GM12878 (cell line): ENCODE measurements at regions of chr3 and their contacts with region 1.

Region 1: GRCh38 chr3:197256836-197257444 is 41.5 kb downstream of the DLG1 start:
- DNase-seq: no peak
- ATAC-seq: 0 out of 3 replicates have a peak, but pooled peaks have one; percentile 38
- H3K4me3 ChIP-seq: no peak overlapping the region
- H3K27ac ChIP-seq: no peak overlapping the region
- H3K4me1 ChIP-seq: no peaks in the 10 kb centered on the region
- H3K27me3 ChIP-seq: no peaks in the 10 kb centered on the region
- CTCF ChIP-seq: peak; percentile 40 to 60 (median 56); a peak in 5 of 6 replicates
- EP300 ChIP-seq: no peak
- POLR2A ChIP-seq: no peak
- RAD21 ChIP-seq: peak; percentile 70

Region 2: DNA sequence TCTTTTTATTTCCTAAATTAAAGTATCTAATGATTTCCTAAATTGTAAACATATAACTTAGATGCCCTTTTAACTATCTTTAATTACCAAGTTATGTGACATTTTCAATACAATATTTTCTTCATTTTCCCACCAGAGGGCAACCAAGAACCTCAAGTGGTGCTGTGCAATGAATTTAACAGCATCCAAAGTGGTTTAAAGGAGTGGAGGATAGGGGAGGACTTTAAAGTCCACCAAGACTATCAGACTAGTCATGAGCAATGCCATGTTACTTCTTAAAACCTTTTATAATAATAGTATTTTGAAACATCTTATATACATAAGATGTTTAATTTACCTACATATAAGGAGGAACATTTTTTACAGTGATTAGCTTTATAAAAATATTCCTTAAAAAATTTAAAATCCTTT is 32.9 kb before region 1 on chr3:
- CTCF ChIA-PET with region 1: interaction called, 101 read pairs
- POLR2A ChIA-PET with region 1: no interaction called
- RAD21 ChIA-PET with region 1: interaction called, 27 read pairs
- SMC1A ChIA-PET with region 1: interaction called, 35 read pairs
- in situ Hi-C with region 1: no loop called
- intact Hi-C with region 1: loop called (anchors 5 kb)
- DNase-seq: peak; percentile 19
- ATAC-seq: peak; percentile 84
- H3K4me3 ChIP-seq: no peak overlapping the region
- H3K27ac ChIP-seq: no peak overlapping the region
- H3K4me1 ChIP-seq: peaks cover 3% of the 10 kb centered on the region; the same call in 1 of the 2 replicates
- H3K27me3 ChIP-seq: no peaks in the 10 kb centered on the region
- CTCF ChIP-seq: peak; percentile 40 to 66 (median 47); a peak in 5 of 6 replicates
- EP300 ChIP-seq: no peak
- POLR2A ChIP-seq: no peak
- RAD21 ChIP-seq: peak; percentile 86

Region 3: DNA sequence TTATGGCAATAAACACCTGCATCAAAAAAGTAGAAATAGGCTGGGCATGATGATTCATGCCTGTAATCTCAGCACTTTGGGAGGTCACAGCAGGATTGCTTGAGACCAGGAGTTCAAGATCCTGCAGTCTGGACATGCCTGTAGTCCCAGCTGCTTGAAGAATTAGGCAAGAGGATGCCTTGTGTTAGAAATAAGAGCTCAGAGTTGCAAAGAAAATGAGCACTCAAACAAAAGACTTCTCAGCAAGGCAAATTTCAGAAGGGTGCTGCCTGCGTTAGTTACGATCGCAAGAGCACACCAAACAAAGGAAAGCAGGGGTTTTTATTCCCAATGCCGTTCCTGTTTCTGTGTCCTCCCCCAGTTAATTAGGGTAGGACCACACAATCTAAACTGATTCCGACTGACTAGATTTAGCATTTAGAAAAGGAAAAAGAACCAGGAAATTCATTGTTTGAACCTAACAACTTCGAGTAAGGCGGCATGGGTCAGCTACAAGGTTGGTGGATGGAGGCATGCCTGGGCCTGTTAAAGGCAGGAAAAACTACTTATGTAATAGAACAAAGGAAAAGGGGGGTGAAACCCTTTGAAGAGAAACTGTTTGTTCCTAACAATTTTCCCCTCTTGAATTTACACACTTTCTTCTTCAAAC is 14.0 kb before region 1 on chr3:
- CTCF ChIA-PET with region 1: interaction called, 30 read pairs
- POLR2A ChIA-PET with region 1: interaction called, 4 read pairs
- RAD21 ChIA-PET with region 1: interaction called, 3 read pairs
- SMC1A ChIA-PET with region 1: interaction called, 10 read pairs
- in situ Hi-C with region 1: no loop called
- intact Hi-C with region 1: no loop called
- DNase-seq: no peak
- ATAC-seq: no peak
- H3K4me3 ChIP-seq: no peak overlapping the region
- H3K27ac ChIP-seq: no peak overlapping the region
- H3K4me1 ChIP-seq: peaks cover 16% of the 10 kb centered on the region
- H3K27me3 ChIP-seq: no peaks in the 10 kb centered on the region
- CTCF ChIP-seq: no peak
- EP300 ChIP-seq: no peak
- POLR2A ChIP-seq: no peak
- RAD21 ChIP-seq: no peak

Region 4: DNA sequence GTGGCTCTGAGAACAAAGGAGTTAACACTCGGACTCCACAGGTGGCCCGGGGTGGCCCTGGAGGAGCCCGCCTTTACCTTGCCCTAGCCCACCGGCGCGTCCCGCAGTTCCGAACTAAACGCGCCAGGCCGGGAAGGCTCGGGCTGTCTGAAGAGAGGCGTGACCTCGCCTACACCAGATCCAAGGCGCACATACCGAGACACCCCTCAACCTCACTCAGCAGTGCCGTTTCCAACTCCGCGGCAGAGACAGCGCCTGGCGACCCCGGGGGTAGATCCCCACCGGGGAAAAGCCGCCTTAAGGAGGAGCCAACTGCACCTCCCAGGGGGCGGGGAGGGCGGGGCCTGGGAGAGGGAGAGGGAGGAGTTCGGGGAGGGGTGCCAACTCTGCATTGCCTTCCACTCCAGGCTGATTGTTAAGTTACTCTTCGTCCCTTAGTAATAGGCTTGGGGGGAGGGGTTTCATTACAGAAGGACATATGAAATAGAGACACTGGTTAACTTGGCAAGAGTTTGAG is 41.5 kb after region 1 on chr3 and contains the start of gene DLG1:
- CTCF ChIA-PET with region 1: interaction called, 12 read pairs
- POLR2A ChIA-PET with region 1: no interaction called
- RAD21 ChIA-PET with region 1: interaction called, 9 read pairs
- SMC1A ChIA-PET with region 1: interaction called, 26 read pairs
- in situ Hi-C with region 1: no loop called
- intact Hi-C with region 1: no loop called
- DNase-seq: peak; percentile 53
- ATAC-seq: peak; percentile 84
- H3K4me3 ChIP-seq: peak within 1 kb of the TSS; percentile 97
- H3K27ac ChIP-seq: peak within 1 kb of the TSS; percentile 87
- H3K4me1 ChIP-seq: no peaks in the 10 kb centered on the region; the same call in 1 of the 2 replicates
- H3K27me3 ChIP-seq: no peaks in the 10 kb centered on the region; a peak in 3 of 4 replicates
- CTCF ChIP-seq: no peak
- EP300 ChIP-seq: no peak
- POLR2A ChIP-seq: peak; percentile 85
- RAD21 ChIP-seq: no peak
- polyA plus RNA-seq, gene DLG1: 9.2 to 10.0 TPM

Region 5: GRCh38 chr3:197394464-197395321 is 137.8 kb after region 1 on chr3:
- CTCF ChIA-PET with region 1: interaction called, 8 read pairs
- POLR2A ChIA-PET with region 1: interaction called, 4 read pairs
- RAD21 ChIA-PET with region 1: interaction called, 10 read pairs
- SMC1A ChIA-PET with region 1: interaction called, 14 read pairs
- in situ Hi-C with region 1: no loop called
- intact Hi-C with region 1: loop called (anchors 10 kb)
- DNase-seq: peak; percentile 96
- ATAC-seq: peak; percentile 94
- H3K4me3 ChIP-seq: peak overlapping the region; percentile 44; the same call in 1 of the 2 replicates
- H3K27ac ChIP-seq: peak overlapping the region; percentile 89
- H3K4me1 ChIP-seq: peaks cover 30% of the 10 kb centered on the region
- H3K27me3 ChIP-seq: no peaks in the 10 kb centered on the region
- CTCF ChIP-seq: no peak
- EP300 ChIP-seq: peak; percentile 99 to 100
- POLR2A ChIP-seq: peak; percentile 69; the same call in 1 of the 2 replicates
- RAD21 ChIP-seq: peak; percentile 21; the same call in 1 of the 2 replicates

Region 6: GRCh38 chr3:197494366-197495058 is 237.6 kb after region 1 on chr3:
- CTCF ChIA-PET with region 1: interaction called, 141 read pairs
- POLR2A ChIA-PET with region 1: no interaction called
- RAD21 ChIA-PET with region 1: interaction called, 86 read pairs
- SMC1A ChIA-PET with region 1: interaction called, 89 read pairs
- in situ Hi-C with region 1: no loop called
- intact Hi-C with region 1: no loop called
- DNase-seq: no peak
- ATAC-seq: no peak
- H3K4me3 ChIP-seq: no peak overlapping the region
- H3K27ac ChIP-seq: peak overlapping the region; percentile 49
- H3K4me1 ChIP-seq: peaks cover 30% of the 10 kb centered on the region
- H3K27me3 ChIP-seq: no peaks in the 10 kb centered on the region; a peak in 1 of 4 replicates
- CTCF ChIP-seq: no peak
- EP300 ChIP-seq: no peak
- POLR2A ChIP-seq: no peak
- RAD21 ChIP-seq: no peak